A673 (cell line): ENCODE measurements at regions of chr10 and their contacts with region 1.

Region 1: GRCh38 chr10:129963641-129964501 is at the start of gene EBF3:
- DNase-seq: peak; percentile 96
- H3K4me3 ChIP-seq: peak within 1 kb of the TSS; percentile 79
- H3K27ac ChIP-seq: peak within 1 kb of the TSS; percentile 86
- H3K4me1 ChIP-seq: peaks cover 33% of the 10 kb centered on the region
- H3K27me3 ChIP-seq: no peaks in the 10 kb centered on the region
- CTCF ChIP-seq: no peak
- total RNA-seq, gene EBF3: 52.2 and 56.2 TPM in 2 replicates

Region 2: GRCh38 chr10:128530301-128530700 is 1433.6 kb before region 1 on chr10:
- CTCF ChIA-PET with region 1: no interaction called
- POLR2A ChIA-PET with region 1: no interaction called
- intact Hi-C with region 1: loop called (anchors 10 kb)
- DNase-seq: peak; percentile 49
- H3K4me3 ChIP-seq: no peak overlapping the region
- H3K27ac ChIP-seq: no peak overlapping the region
- H3K4me1 ChIP-seq: peaks cover 53% of the 10 kb centered on the region
- H3K27me3 ChIP-seq: peaks cover 2% of the 10 kb centered on the region
- CTCF ChIP-seq: peak; percentile 74

Region 3: DNA sequence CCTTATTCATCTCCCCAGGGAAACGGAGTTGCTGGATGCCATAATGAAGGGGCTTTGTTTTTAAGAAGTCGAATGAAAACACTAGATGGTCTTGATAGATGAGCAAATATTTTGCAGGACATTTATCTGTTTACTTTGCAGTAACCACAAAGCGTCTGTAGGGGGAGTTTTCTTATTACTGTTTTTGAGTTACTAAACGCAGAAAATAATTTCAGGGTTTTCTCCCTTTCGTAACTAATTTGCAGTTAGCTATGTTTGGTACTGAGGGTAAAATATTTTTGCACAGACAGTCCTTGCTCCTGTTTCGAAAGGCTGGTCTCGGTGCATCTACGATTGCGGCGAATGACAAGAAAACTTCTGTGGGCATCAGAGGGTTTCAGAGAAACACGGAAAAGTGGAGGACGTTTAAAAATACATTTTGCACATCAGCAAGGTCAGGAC is 1332.0 kb before region 1 on chr10:
- CTCF ChIA-PET with region 1: no interaction called
- POLR2A ChIA-PET with region 1: no interaction called
- intact Hi-C with region 1: loop called (anchors 5 kb)
- DNase-seq: peak; percentile 69
- H3K4me3 ChIP-seq: no peak overlapping the region
- H3K27ac ChIP-seq: no peak overlapping the region
- H3K4me1 ChIP-seq: peaks cover 10% of the 10 kb centered on the region
- H3K27me3 ChIP-seq: no peaks in the 10 kb centered on the region
- CTCF ChIP-seq: peak; percentile 74

Region 4: GRCh38 chr10:129161150-129161549 is 802.7 kb before region 1 on chr10:
- CTCF ChIA-PET with region 1: no interaction called
- POLR2A ChIA-PET with region 1: no interaction called
- intact Hi-C with region 1: loop called (anchors 10 kb)
- DNase-seq: peak; percentile 94
- H3K4me3 ChIP-seq: no peak overlapping the region
- H3K27ac ChIP-seq: peak overlapping the region; percentile 1
- H3K4me1 ChIP-seq: peaks cover 19% of the 10 kb centered on the region
- H3K27me3 ChIP-seq: no peaks in the 10 kb centered on the region
- CTCF ChIP-seq: no peak

Region 5: GRCh38 chr10:129233351-129234148 is 730.3 kb before region 1 on chr10:
- CTCF ChIA-PET with region 1: no interaction called
- POLR2A ChIA-PET with region 1: no interaction called
- intact Hi-C with region 1: no loop called
- DNase-seq: no peak
- H3K4me3 ChIP-seq: no peak overlapping the region
- H3K27ac ChIP-seq: no peak overlapping the region
- H3K4me1 ChIP-seq: no peaks in the 10 kb centered on the region
- H3K27me3 ChIP-seq: no peaks in the 10 kb centered on the region
- CTCF ChIP-seq: no peak

Region 6: GRCh38 chr10:129853562-129853903 is 110.3 kb before region 1 on chr10:
- CTCF ChIA-PET with region 1: interaction called, 4 read pairs
- POLR2A ChIA-PET with region 1: no interaction called
- intact Hi-C with region 1: loop called (anchors 5 kb)
- DNase-seq: no peak
- H3K4me3 ChIP-seq: peak overlapping the region; percentile 12
- H3K27ac ChIP-seq: peak overlapping the region; percentile 54
- H3K4me1 ChIP-seq: peaks cover 33% of the 10 kb centered on the region
- H3K27me3 ChIP-seq: no peaks in the 10 kb centered on the region
- CTCF ChIP-seq: peak; percentile 63

Region 7: DNA sequence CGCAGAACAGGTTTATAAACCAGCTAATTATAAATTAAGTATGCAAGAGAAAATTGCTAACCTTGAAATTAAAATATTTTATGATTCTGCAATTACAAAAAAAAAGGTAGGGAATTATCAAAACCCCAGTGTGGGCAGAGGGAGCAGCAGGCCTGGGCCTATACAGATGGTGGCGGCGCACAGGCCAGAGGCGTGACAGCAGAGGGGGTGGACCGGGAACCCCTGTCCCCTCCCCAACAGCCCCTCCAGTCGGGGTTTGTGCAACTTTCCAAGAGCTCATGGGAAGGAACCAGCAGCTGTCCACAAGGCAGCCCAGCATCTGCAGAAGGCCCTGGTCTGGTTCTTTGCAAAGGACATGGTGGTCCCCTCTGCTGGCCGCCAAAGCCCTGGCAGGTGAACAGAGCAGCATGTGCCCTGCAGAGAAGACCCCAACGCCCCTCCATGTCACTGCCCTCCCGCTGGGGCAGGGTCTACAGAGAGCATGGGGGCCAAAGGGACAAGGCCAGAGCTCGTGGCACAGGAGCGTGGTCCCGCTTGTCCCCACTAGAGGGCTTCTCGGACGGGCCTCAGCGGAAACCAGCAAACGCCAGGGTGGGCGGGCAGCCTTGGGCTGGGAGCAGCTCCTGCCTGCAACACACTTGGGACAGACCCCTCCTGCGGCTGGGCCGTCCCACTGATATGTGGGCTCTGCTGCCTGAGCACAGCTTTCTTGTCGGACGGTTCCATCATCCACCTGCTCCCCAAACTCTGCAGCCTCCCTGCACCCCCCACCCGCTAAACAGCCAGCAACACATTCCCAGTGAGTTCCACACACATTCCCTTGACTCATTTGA is 74.9 kb before region 1 on chr10:
- CTCF ChIA-PET with region 1: no interaction called
- POLR2A ChIA-PET with region 1: interaction called, 3 read pairs
- intact Hi-C with region 1: loop called (anchors 5 kb)
- DNase-seq: peak; percentile 70
- H3K4me3 ChIP-seq: no peak overlapping the region
- H3K27ac ChIP-seq: no peak overlapping the region
- H3K4me1 ChIP-seq: peaks cover 50% of the 10 kb centered on the region
- H3K27me3 ChIP-seq: no peaks in the 10 kb centered on the region
- CTCF ChIP-seq: peak; percentile 80